ENCODE measurements at regions of chr1 and their contacts with region 1.

Region 1: GRCh38 chr1:156689035-156689952 is 12.1 kb upstream of the NES start:
- DNase-seq: peak; percentile 92
- H3K4me3 Mint-ChIP-seq: no peak overlapping the region
- H3K27ac Mint-ChIP-seq: no peak overlapping the region
- H3K4me1 Mint-ChIP-seq: peaks cover 32% of the 10 kb centered on the region
- H3K27me3 Mint-ChIP-seq: peaks cover 37% of the 10 kb centered on the region
- CTCF ChIP-seq: peak; percentile 97

Region 2: DNA sequence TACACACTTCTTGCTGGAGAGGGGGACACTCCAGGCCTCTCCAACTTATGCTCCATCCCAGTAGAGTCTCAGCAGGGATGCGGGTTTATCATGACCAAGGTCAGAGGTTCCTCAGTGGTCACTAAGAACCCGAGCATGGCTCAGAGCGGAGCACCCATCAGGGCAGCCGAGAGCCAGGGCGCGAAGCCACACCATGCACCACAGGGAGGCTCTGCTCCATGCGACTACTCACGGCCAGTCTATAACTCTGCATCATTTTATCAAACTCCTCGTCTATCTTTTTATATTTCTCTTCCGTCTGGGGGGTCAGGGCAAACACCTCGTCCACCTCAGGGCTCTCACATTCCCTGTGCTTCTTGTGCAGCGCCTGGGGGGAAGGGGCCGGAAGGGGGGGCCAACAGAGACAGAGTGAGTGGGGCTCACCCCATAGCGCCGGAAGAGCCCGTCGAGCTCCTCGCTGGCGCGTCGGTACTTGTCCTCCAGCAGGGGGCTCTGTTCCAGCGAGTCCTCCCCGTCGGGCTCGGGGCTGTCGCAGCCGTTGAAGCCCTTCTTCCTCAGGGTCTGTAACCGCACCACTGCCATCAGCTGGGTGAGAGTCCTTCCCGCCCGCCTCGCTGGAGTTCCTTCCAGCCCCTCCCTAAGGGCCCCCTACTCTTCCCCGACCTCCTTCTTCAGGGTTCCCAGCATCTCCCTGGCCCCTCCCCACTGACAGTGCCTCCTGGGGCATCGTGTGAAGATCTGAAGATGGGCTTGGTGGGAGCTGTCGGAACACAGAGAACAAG is 208.7 kb before region 1 on chr1:
- CTCF ChIA-PET with region 1: no interaction called
- POLR2A ChIA-PET with region 1: no interaction called
- intact Hi-C with region 1: no loop called
- DNase-seq: peak; percentile 33
- H3K4me3 Mint-ChIP-seq: no peak overlapping the region
- H3K27ac Mint-ChIP-seq: peak overlapping the region; percentile 82
- H3K4me1 Mint-ChIP-seq: peaks cover 31% of the 10 kb centered on the region
- H3K27me3 Mint-ChIP-seq: no peaks in the 10 kb centered on the region
- CTCF ChIP-seq: peak; percentile 53

Region 3: GRCh38 chr1:156554971-156555370 is 134.3 kb before region 1 on chr1:
- CTCF ChIA-PET with region 1: no interaction called
- POLR2A ChIA-PET with region 1: no interaction called
- intact Hi-C with region 1: no loop called
- DNase-seq: no peak
- H3K4me3 Mint-ChIP-seq: no peak overlapping the region
- H3K27ac Mint-ChIP-seq: peak overlapping the region; percentile 20
- H3K4me1 Mint-ChIP-seq: peaks cover 17% of the 10 kb centered on the region
- H3K27me3 Mint-ChIP-seq: no peaks in the 10 kb centered on the region
- CTCF ChIP-seq: no peak

Region 4: GRCh38 chr1:156625436-156626078 is 63.7 kb before region 1 on chr1:
- CTCF ChIA-PET with region 1: interaction called, 91 read pairs
- POLR2A ChIA-PET with region 1: no interaction called
- intact Hi-C with region 1: loop called (anchors 2 kb)
- DNase-seq: peak; percentile 61
- H3K4me3 Mint-ChIP-seq: peak overlapping the region; percentile 35
- H3K27ac Mint-ChIP-seq: no peak overlapping the region
- H3K4me1 Mint-ChIP-seq: peaks cover 12% of the 10 kb centered on the region
- H3K27me3 Mint-ChIP-seq: peaks cover 61% of the 10 kb centered on the region
- CTCF ChIP-seq: peak; percentile 91

Region 5: GRCh38 chr1:156659994-156660751 is 29.1 kb before region 1 on chr1:
- CTCF ChIA-PET with region 1: interaction called, 552 read pairs
- POLR2A ChIA-PET with region 1: interaction called, 15 read pairs
- intact Hi-C with region 1: loop called (anchors 1 kb)
- DNase-seq: peak; percentile 99
- H3K4me3 Mint-ChIP-seq: peak overlapping the region; percentile 87
- H3K27ac Mint-ChIP-seq: peak overlapping the region; percentile 83
- H3K4me1 Mint-ChIP-seq: peaks cover 49% of the 10 kb centered on the region
- H3K27me3 Mint-ChIP-seq: no peaks in the 10 kb centered on the region
- CTCF ChIP-seq: peak; percentile 98

Region 6: GRCh38 chr1:156721535-156721934 is 32.2 kb after region 1 on chr1:
- CTCF ChIA-PET with region 1: interaction called, 2,415 read pairs
- POLR2A ChIA-PET with region 1: interaction called, 187 read pairs
- intact Hi-C with region 1: loop called (anchors 1 kb)
- DNase-seq: no peak
- H3K4me3 Mint-ChIP-seq: no peak overlapping the region
- H3K27ac Mint-ChIP-seq: peak overlapping the region; percentile 54
- H3K4me1 Mint-ChIP-seq: peaks cover 11% of the 10 kb centered on the region
- H3K27me3 Mint-ChIP-seq: no peaks in the 10 kb centered on the region
- CTCF ChIP-seq: no peak

Region 7: DNA sequence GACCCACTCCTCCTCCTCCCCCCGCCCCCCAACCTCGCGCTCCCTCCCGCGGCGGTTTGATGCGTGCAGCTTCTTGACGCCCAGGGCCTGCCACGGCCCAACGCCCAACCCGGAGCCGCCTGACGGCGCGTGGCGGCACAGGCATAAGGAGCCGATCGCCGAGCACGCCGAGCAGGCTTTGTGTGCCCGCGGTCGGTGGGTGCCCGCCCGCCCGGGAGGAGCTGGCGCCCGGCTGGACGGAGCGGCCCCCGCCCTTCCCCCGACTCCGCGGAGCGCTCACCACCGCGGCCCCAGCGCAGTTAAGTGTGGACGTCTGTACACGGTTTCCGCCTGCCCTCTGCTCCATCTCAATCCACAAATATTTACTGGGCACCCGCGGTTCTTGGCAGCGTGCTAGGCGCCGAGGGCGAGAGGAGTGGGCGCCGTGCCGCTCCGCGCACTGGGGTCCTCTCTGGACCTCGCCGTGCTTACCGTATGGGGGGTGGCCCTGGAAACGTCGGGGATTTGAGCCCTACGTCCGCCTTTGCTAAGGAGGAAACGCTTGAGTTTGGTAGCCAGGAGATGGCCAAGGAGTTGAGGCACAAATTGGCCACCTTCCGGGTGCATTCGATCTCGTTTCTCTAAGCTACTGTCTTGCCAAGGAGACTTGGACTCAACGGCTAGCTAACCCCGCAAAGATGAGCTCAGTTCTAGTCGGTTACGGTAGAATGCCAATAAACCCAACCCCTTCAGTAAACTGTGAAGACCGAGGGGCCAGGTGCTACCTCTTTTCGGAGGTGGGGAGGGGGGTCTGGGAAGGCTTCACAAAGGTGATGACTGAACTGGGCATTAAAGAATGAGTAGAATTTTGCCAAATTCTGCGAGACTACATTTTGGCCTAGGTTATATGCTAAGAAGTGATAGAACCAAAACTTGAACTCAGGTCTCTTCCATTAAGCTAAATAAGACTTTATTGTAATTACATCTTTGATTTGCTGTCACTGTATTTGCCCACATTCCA is 62.8 kb after region 1 on chr1:
- CTCF ChIA-PET with region 1: interaction called, 23 read pairs
- POLR2A ChIA-PET with region 1: interaction called, 9 read pairs
- intact Hi-C with region 1: no loop called
- DNase-seq: peak; percentile 99
- H3K4me3 Mint-ChIP-seq: peak overlapping the region; percentile 79
- H3K27ac Mint-ChIP-seq: peak overlapping the region; percentile 99
- H3K4me1 Mint-ChIP-seq: peaks cover 37% of the 10 kb centered on the region
- H3K27me3 Mint-ChIP-seq: no peaks in the 10 kb centered on the region
- CTCF ChIP-seq: no peak

Region 8: DNA sequence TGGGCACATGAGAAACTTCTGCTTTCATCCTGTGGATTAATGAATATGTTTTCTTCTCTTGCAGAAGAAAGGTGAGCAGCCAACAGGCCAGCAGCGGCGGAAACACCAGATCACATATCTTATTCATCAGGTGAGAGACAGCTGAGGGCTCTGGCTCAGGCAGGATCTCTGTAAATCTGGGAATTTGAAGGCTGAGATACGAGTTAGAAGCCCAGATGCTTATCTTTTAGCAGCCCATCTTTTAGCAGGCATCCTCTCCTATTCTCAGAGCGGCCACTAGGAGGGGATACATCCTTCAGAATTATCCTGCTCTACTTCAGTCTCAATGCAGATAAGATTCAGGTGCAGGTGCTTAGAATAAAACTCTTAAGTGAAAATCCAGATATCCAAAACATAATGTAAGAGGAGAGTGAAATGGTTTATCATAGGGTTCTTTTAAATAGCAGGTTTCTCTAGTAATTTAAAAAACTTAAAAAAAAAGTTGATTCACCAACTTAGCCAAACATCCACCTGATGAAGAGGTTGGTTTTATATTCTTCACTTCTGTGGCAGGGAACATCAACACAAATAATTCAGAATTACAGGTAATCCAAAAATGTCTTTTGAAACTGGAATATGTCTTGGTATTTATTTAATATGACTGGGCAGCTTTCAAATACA is 108.0 kb after region 1 on chr1:
- CTCF ChIA-PET with region 1: interaction called, 14 read pairs
- POLR2A ChIA-PET with region 1: interaction called, 4 read pairs
- intact Hi-C with region 1: no loop called
- DNase-seq: peak; percentile 82
- H3K4me3 Mint-ChIP-seq: no peak overlapping the region
- H3K27ac Mint-ChIP-seq: no peak overlapping the region
- H3K4me1 Mint-ChIP-seq: no peaks in the 10 kb centered on the region
- H3K27me3 Mint-ChIP-seq: no peaks in the 10 kb centered on the region
- CTCF ChIP-seq: peak; percentile 93

Measured in MCF 10A (cell line).